ENCODE measurements at regions of chr2 and their contacts with region 1.

Region 1: DNA sequence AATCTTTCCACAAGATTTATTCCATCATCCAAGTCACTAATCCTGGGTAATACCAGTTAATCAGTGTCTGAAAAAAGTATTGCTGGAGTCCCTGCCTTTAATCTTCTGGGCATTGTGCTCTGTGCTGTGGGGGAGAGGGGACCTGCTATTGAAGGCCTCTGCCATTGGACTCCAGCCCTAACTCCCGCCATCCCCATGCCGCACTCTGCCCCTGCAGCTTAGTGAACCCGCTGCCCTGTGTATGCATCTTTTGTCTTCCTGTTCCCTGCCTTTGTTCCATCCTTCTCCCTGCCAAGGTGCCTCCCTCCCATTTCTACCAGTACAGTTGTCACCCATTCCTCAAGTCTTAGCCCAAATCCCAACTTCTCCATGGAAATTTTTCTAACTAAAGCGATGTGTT is 113.8 kb upstream of the EPAS1 start:
- DNase-seq: no peak
- H3K4me3 ChIP-seq: no peak overlapping the region
- H3K27ac ChIP-seq: no peak overlapping the region
- H3K4me1 ChIP-seq: no peaks in the 10 kb centered on the region
- CTCF ChIP-seq: no peak

Region 2: GRCh38 chr2:45946023-45946422 is 237.4 kb before region 1 on chr2:
- CTCF ChIA-PET with region 1: no interaction called
- POLR2A ChIA-PET with region 1: no interaction called
- intact Hi-C with region 1: no loop called
- DNase-seq: no peak
- H3K4me3 ChIP-seq: no peak overlapping the region
- H3K27ac ChIP-seq: no peak overlapping the region
- H3K4me1 ChIP-seq: no peaks in the 10 kb centered on the region
- CTCF ChIP-seq: no peak

Region 3: DNA sequence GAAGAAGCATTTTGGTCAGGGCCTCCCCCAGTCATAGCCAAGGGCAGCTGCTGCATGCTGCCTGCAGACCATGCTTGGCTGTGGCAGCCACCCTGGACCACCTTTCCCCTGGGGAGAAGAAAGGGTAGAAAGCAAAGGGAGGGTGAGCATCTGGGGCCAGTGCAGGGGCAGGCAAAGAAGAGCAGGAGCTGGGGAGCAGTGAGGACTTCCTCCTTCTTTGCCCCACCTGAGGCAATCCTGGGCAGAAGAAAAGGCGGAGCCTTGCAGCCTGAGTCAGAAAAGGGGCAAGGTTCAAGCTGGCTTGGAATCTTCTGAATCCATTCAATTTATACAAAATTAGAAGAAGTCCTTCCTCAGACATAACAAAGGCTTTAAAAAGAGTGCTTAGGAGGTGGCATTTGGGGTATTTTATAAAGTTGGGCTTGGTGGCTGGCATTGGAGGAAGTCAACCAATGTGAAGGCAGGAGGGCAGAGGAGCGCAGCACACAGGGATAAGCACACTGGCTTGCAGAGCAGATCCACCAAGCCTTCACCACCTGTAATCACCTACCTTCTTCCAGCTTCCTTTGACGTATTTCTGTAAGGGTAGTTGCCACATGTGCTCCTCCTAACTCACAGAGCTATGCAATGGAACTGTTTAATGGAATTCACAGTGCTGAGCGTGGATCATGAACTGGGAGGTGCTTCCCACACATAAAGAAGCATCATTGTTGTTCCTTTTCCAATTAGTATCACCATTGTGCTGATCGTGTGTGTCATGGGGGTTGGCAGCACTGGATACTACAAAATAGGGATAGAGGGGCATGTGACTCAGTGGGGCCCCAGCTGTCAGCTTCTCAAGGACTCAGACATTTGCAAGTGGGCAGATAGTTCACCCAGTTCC is 40.6 kb before region 1 on chr2:
- CTCF ChIA-PET with region 1: no interaction called
- POLR2A ChIA-PET with region 1: no interaction called
- intact Hi-C with region 1: loop called (anchors 1 kb)
- DNase-seq: no peak
- H3K4me3 ChIP-seq: no peak overlapping the region
- H3K27ac ChIP-seq: no peak overlapping the region
- H3K4me1 ChIP-seq: no peaks in the 10 kb centered on the region
- CTCF ChIP-seq: no peak

Region 4: GRCh38 chr2:46389417-46389916 is 206.0 kb after region 1 on chr2:
- CTCF ChIA-PET with region 1: no interaction called
- POLR2A ChIA-PET with region 1: no interaction called
- intact Hi-C with region 1: no loop called
- DNase-seq: no peak
- H3K4me3 ChIP-seq: no peak overlapping the region
- H3K27ac ChIP-seq: no peak overlapping the region
- H3K4me1 ChIP-seq: no peaks in the 10 kb centered on the region
- CTCF ChIP-seq: no peak